ENCODE measurements at regions of chr18 and their contacts with region 1.

Region 1: GRCh38 chr18:25351777-25352628 is at the start of gene ZNF521:
- DNase-seq: peak; percentile 72 to 80 (median 73)
- ATAC-seq: peak; percentile 92
- H3K4me3 ChIP-seq: peak within 1 kb of the TSS; percentile 19
- H3K4me1 ChIP-seq: peaks cover 10% of the 10 kb centered on the region
- CTCF ChIP-seq: no peak
- total RNA-seq, gene ZNF521: 3.2 to 11.6 (median 7.9) TPM

Region 2: DNA sequence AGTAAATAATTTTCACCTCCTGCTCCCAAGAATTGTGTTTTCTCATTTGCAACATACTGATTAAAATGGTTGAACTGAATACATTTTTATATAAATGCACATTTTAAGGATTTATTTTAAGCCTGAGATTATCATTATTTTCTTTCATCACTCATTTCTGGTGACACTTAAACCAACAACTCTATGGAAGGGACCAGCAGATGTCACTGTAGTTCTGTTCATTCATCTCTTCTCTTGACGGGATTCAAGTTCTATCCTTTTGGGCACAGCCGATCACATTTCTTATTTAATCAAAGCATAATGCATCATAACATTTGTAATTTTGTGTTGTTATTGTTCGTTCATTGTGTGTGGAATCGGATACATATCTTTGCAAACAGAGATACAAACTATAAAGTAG is 473.7 kb before region 1 on chr18:
- intact Hi-C with region 1: loop called in 1 of 2 experiments (anchors 5 kb)
- DNase-seq: peak in 1 of 3 donors; percentile 70
- ATAC-seq: peak; percentile 56
- H3K4me3 ChIP-seq: no peak overlapping the region
- H3K4me1 ChIP-seq: no peaks in the 10 kb centered on the region
- CTCF ChIP-seq: no peak

Region 3: GRCh38 chr18:25503567-25504081 is 151.6 kb after region 1 on chr18:
- intact Hi-C with region 1: loop called in 1 of 2 experiments (anchors 10 kb)
- DNase-seq: peak; percentile 41 to 79 (median 49)
- ATAC-seq: peak; percentile 94
- H3K4me3 ChIP-seq: no peak overlapping the region
- H3K4me1 ChIP-seq: no peaks in the 10 kb centered on the region
- CTCF ChIP-seq: no peak